Gastrocnemius medialis (tissue), 4 donors: ENCODE measurements at regions of chr2 and their contacts with region 1.

Region 1: GRCh38 chr2:197184959-197185586 is 125.5 kb downstream of the ANKRD44 start:
- DNase-seq: peak; percentile 83 to 94
- ATAC-seq: peak; percentile 92 to 93
- H3K4me3 ChIP-seq: no peak overlapping the region
- H3K27ac ChIP-seq: peak overlapping the region; percentile 64 to 74 (median 73)
- H3K4me1 ChIP-seq: peaks cover 18 to 24% of the 10 kb centered on the region in 2 donors
- H3K27me3 ChIP-seq: no peaks in the 10 kb centered on the region
- CTCF ChIP-seq: no peak
- POLR2A ChIP-seq: no peak

Region 2: GRCh38 chr2:196887431-196887830 is 297.6 kb before region 1 on chr2:
- in situ Hi-C with region 1: no loop called
- intact Hi-C with region 1: no loop called
- DNase-seq: no peak
- ATAC-seq: no peak
- H3K4me3 ChIP-seq: no peak overlapping the region
- H3K27ac ChIP-seq: no peak overlapping the region
- H3K4me1 ChIP-seq: no peaks in the 10 kb centered on the region
- H3K27me3 ChIP-seq: no peaks in the 10 kb centered on the region
- CTCF ChIP-seq: no peak
- POLR2A ChIP-seq: no peak

Region 3: DNA sequence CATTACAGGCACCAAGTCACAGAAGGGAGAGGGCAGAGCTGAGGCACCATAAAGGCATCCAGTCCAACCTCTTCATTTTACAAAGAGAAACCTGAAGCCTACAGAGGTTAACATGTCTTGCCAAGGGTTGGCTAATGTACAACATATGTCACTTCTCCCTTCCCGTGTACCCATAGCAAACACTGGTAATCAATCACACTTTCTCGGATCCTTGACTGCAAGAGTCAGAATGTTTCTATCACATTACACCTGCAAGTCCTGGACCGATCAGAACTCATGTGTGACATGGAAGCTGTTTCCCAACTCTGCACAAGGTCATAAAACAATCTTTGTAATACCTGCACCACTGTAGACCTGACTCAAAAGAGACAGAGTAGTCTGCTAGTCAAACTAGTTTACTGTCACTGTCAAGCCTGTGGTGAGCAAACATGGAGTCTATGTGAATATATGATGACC is 119.5 kb after region 1 on chr2:
- in situ Hi-C with region 1: no loop called
- intact Hi-C with region 1: loop called (anchors 2 kb)
- DNase-seq: peak in 1 of 2 donors; percentile 11
- ATAC-seq: peak; percentile 63 to 69
- H3K4me3 ChIP-seq: no peak overlapping the region
- H3K27ac ChIP-seq: peak overlapping the region in 3 of 4 donors; percentile 29 to 79 (median 41)
- H3K4me1 ChIP-seq: peaks cover 29 to 35% of the 10 kb centered on the region in 2 donors
- H3K27me3 ChIP-seq: no peaks in the 10 kb centered on the region
- CTCF ChIP-seq: no peak
- POLR2A ChIP-seq: no peak